Ascending aorta (tissue), 2 donors: ENCODE measurements at regions of chr3 and their contacts with region 1.

Region 1: GRCh38 chr3:132352541-132353143 is 35.4 kb downstream of the ACP3 start:
- DNase-seq: peak in 1 of 2 donors; percentile 84
- H3K4me3 ChIP-seq: no peak overlapping the region
- H3K27ac ChIP-seq: no peak overlapping the region
- H3K4me1 ChIP-seq: no peaks in the 10 kb centered on the region
- H3K27me3 ChIP-seq: no peaks in the 10 kb centered on the region
- CTCF ChIP-seq: peak; percentile 74 to 88 (median 88)

Region 2: GRCh38 chr3:132381348-132381944 is 28.8 kb after region 1 on chr3:
- intact Hi-C with region 1: no loop called
- DNase-seq: no peak
- H3K4me3 ChIP-seq: no peak overlapping the region
- H3K27ac ChIP-seq: no peak overlapping the region
- H3K4me1 ChIP-seq: no peaks in the 10 kb centered on the region
- H3K27me3 ChIP-seq: no peaks in the 10 kb centered on the region
- CTCF ChIP-seq: no peak

Region 3: DNA sequence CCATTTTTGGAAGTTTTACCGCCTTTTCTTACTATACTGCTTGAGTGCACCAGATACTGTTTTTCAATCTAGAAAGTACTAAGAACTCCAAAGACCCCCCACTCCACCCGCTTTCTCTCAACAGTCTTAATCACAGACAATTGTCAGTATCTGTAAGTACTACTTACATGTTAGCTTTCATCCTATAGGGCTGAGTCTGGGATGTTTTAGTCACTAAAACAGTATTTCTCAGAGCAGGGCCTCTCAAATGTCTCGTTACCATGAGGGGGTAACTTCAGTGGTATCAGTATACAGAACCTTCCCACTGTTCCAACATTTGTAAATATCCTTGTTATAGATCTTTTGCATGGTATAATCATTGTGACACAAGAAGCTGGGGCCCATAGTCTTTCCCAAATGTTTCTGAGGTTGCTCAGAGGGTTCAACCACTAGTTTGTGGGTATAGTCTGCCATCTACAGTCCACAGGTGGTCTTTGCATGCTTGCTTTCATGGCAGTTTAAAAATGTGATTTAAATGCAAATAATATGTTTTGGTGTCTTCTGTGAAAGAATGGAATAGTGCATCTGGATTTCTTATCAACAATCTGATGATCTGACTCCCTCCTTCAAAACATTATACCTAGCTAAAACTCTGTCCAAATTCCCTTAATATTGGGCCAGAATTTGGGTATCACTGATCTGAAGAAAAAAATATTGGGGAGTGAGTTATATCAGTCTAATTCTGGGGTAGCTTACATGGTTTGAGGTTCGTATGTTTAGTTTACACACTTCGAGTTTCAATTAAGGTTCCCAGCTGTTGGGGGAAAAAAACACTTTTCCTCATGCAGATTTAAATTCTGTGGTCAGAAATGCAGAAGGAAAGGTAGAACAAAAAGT is 46.6 kb after region 1 on chr3:
- intact Hi-C with region 1: loop called (anchors 5 kb)
- DNase-seq: no peak
- H3K4me3 ChIP-seq: no peak overlapping the region
- H3K27ac ChIP-seq: no peak overlapping the region
- H3K4me1 ChIP-seq: no peaks in the 10 kb centered on the region
- H3K27me3 ChIP-seq: no peaks in the 10 kb centered on the region
- CTCF ChIP-seq: peak; percentile 36 to 62 (median 47)

Region 4: DNA sequence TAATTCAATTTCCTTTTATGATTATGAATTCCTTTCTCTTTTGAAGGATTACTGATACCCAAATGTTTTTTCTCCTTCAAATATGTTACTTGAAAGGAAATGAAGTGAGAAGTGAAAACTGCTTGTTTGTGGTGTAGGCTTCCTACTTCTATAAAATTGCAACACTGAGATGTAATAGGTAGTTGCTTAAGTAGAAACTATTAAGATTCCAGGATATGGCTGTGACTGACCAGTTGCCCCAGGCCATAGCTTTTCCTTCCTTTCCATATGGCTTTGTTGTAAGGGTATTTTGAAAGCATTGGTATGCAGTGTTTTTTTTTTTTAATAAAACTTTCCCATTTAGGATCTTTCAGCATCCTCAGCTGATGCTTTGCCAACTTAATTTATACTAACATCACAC is 93.2 kb after region 1 on chr3:
- intact Hi-C with region 1: loop called (anchors 5 kb)
- DNase-seq: no peak
- H3K4me3 ChIP-seq: no peak overlapping the region
- H3K27ac ChIP-seq: no peak overlapping the region
- H3K4me1 ChIP-seq: peaks cover 7 to 29% of the 10 kb centered on the region in 2 donors
- H3K27me3 ChIP-seq: no peaks in the 10 kb centered on the region
- CTCF ChIP-seq: no peak

Region 5: DNA sequence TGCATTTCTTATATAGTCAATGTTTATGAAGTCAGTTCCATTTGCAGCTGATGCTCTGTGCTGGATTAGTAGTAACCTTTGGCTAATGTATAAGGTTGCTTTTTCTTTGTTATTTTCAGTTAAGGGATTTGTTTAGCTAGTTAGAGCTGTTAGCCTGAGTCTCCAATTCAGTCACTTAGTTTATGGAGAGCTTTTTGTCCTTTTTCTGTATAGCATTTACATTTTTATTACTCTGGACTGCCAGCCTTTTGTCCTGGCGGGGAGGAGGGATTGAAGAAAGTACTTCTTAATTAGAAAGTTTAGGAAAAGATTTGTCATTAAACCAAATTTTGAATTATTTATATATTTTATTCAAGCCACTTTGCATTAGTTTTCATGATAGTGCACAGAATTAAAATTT is 116.7 kb after region 1 on chr3:
- intact Hi-C with region 1: loop called (anchors 5 kb)
- DNase-seq: no peak
- H3K4me3 ChIP-seq: no peak overlapping the region
- H3K27ac ChIP-seq: no peak overlapping the region
- H3K4me1 ChIP-seq: no peaks in the 10 kb centered on the region
- H3K27me3 ChIP-seq: no peaks in the 10 kb centered on the region
- CTCF ChIP-seq: no peak